ENCODE measurements at regions of chr5 and their contacts with region 1.

Region 1: DNA sequence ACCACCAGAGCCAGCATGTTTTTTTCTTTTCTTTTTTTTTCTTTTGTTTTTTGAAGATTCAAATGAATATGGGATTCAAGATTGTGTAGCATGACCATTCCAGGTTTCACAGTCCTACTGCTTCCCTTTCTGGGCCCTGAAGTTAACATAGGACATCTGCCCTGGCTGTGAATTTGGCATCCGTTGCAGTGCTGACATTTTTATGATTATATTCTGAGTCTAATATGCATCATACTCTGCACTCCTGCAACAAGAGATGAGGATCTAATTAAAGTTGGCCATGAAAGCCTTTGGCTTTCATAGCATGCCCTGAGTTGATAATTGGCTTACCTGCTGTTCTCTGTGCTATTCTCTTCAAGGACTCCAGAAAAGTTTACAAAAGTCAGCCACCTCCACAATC is 29.8 kb downstream of the C5orf22 start:
- DNase-seq: no peak
- ATAC-seq: no peak
- H3K4me3 ChIP-seq: no peak overlapping the region
- H3K4me3 Mint-ChIP-seq: no peak overlapping the region
- H3K27ac ChIP-seq: no peak overlapping the region
- H3K27ac Mint-ChIP-seq: no peak overlapping the region
- H3K4me1 ChIP-seq: no peaks in the 10 kb centered on the region
- H3K4me1 Mint-ChIP-seq: no peaks in the 10 kb centered on the region
- H3K27me3 ChIP-seq: peaks cover 0 to 3% of the 10 kb centered on the region in 2 experiments
- H3K27me3 Mint-ChIP-seq: peaks cover 0 to 9% of the 10 kb centered on the region in 2 donors

Region 2: DNA sequence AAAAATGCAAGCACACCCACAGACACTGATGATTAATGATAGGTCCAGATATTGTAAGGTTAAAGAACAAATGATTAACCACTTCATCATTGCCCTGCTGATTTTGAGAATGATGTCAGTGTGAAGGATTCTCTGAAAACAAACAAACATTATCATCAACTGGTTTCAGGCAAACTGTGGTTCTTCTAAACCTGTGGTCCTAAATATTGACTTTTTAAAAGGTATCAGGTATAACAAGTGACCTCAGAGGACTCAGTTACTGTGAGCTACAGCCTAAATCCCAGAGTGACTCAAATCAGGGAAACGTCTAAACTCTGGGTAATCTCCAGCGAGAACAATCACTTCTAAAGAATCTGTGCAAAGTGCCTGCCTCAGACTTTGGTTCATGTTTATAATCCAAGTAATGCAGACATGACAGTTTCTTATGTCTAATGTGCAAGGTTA is 540.7 kb before region 1 on chr5:
- CTCF ChIA-PET with region 1: no interaction called
- POLR2A ChIA-PET with region 1: interaction called in 1 of 2 experiments, 10 read pairs
- DNase-seq: no peak
- ATAC-seq: no peak
- H3K4me3 ChIP-seq: no peak overlapping the region
- H3K4me3 Mint-ChIP-seq: no peak overlapping the region
- H3K27ac ChIP-seq: no peak overlapping the region
- H3K27ac Mint-ChIP-seq: no peak overlapping the region
- H3K4me1 ChIP-seq: no peaks in the 10 kb centered on the region
- H3K4me1 Mint-ChIP-seq: no peaks in the 10 kb centered on the region
- H3K27me3 ChIP-seq: no peaks in the 10 kb centered on the region
- H3K27me3 Mint-ChIP-seq: no peaks in the 10 kb centered on the region

Measured in T-cell (primary cell).